Upper lobe of right lung (tissue), 1 donor: ENCODE measurements at regions of chr11 and their contacts with region 1.

Region 1: DNA sequence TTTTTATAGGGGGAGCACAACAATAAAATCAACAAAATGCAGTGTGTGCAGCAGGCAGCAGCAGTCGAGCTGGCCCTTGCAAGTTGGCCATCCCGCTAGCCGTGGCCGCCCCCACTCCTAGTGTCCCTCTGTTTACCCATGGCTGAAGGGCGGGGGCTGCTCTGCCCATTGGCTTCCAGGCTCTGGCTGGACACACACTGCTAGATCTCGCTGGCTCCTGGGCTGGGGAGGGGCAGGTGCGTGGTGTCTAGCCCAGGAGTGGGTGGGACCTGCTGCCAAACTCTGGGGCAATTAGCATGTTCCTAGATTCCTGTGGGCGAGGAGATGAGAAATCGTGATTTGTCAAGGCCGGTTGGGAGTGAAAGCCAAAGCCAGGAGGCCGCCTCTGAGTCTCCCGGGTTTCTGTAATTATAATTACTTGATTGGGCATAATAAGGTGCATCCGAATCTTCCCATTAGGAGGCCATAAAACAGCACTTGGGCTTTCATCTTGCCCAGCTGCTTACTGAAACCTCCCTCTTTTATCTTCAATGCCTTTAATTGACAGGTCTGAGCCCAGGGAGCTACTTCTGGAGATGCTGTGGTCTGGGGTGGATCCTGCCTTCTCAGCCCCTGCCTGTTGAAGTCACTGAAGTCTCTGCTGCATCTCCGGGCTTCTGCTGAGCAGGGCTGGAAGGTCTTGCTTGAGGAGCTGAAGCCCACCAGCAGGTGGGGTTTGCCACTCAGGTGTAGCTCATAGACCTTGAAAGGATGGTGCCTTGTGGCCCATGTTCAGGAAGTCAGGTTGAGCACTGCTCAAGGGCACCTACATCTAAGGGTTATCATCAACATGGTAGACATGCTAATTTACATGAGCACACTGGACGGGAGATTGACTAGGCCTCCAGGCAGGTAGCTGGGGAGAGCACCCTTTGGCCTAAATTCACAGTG is 44.5 kb upstream of the DKK3 start:
- DNase-seq: no peak
- ATAC-seq: no peak
- H3K4me3 ChIP-seq: no peak overlapping the region
- H3K27ac ChIP-seq: no peak overlapping the region
- H3K4me1 ChIP-seq: peaks cover 5% of the 10 kb centered on the region
- H3K27me3 ChIP-seq: no peaks in the 10 kb centered on the region
- CTCF ChIP-seq: no peak

Region 2: GRCh38 chr11:12008790-12009616 is 43.9 kb before region 1 on chr11:
- intact Hi-C with region 1: no loop called
- DNase-seq: peak; percentile 69
- ATAC-seq: peak; percentile 73
- H3K4me3 ChIP-seq: peak overlapping the region; percentile 57
- H3K27ac ChIP-seq: peak overlapping the region; percentile 73
- H3K4me1 ChIP-seq: no peaks in the 10 kb centered on the region
- H3K27me3 ChIP-seq: peaks cover 15% of the 10 kb centered on the region
- CTCF ChIP-seq: no peak

Region 3: GRCh38 chr11:12110201-12110713 is 57.3 kb after region 1 on chr11 and contains the start of gene MICAL2:
- intact Hi-C with region 1: loop called (anchors 10 kb)
- DNase-seq: peak; percentile 96
- ATAC-seq: peak; percentile 97
- H3K4me3 ChIP-seq: peak within 1 kb of the TSS; percentile 77
- H3K27ac ChIP-seq: peak within 1 kb of the TSS; percentile 85
- H3K4me1 ChIP-seq: peaks cover 25% of the 10 kb centered on the region
- H3K27me3 ChIP-seq: no peaks in the 10 kb centered on the region
- CTCF ChIP-seq: no peak
- total RNA-seq, gene MICAL2: 197 TPM

Region 4: GRCh38 chr11:12274558-12275197 is 221.7 kb after region 1 on chr11:
- intact Hi-C with region 1: loop called (anchors 5 kb)
- DNase-seq: no peak
- ATAC-seq: no peak
- H3K4me3 ChIP-seq: no peak overlapping the region
- H3K27ac ChIP-seq: no peak overlapping the region
- H3K4me1 ChIP-seq: peaks cover 5% of the 10 kb centered on the region
- H3K27me3 ChIP-seq: no peaks in the 10 kb centered on the region
- CTCF ChIP-seq: no peak